PC-3 (cell line): ENCODE measurements at regions of chr1 and their contacts with region 1.

Region 1: DNA sequence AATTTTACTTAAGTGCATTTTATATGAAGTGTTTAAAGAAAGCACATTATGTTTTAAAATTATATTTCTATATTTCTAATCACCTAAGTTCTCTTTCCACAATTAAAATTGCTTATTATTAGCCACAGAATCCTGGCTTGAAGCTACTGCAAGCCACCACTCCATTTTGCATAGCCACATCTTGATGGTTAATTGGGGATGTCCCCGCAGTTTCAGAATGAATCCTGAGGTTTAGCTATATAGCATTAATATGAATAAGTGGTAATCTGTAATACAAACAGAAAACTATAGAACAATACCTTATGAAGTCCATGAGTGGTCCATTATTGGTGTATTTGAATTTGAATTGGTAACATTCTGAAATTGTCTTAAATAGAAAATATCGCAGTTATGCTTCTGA is 11.6 kb upstream of the GOLPH3L start:
- DNase-seq: no peak
- ATAC-seq: no peak
- H3K4me3 ChIP-seq: no peak overlapping the region
- H3K27ac ChIP-seq: no peak overlapping the region
- H3K4me1 ChIP-seq: no peaks in the 10 kb centered on the region
- H3K27me3 ChIP-seq: no peaks in the 10 kb centered on the region
- CTCF ChIP-seq: no peak

Region 2: GRCh38 chr1:150757156-150757555 is 48.6 kb after region 1 on chr1:
- CTCF ChIA-PET with region 1: no interaction called
- POLR2A ChIA-PET with region 1: no interaction called
- intact Hi-C with region 1: loop called (anchors 5 kb)
- DNase-seq: no peak
- ATAC-seq: no peak
- H3K4me3 ChIP-seq: no peak overlapping the region
- H3K27ac ChIP-seq: no peak overlapping the region
- H3K4me1 ChIP-seq: no peaks in the 10 kb centered on the region
- H3K27me3 ChIP-seq: no peaks in the 10 kb centered on the region
- CTCF ChIP-seq: no peak

Region 3: GRCh38 chr1:150820710-150821512 is 112.3 kb after region 1 on chr1:
- CTCF ChIA-PET with region 1: no interaction called
- POLR2A ChIA-PET with region 1: no interaction called
- intact Hi-C with region 1: no loop called
- DNase-seq: peak; percentile 74
- ATAC-seq: peak; percentile 100
- H3K4me3 ChIP-seq: no peak overlapping the region
- H3K27ac ChIP-seq: no peak overlapping the region
- H3K4me1 ChIP-seq: peaks cover 15% of the 10 kb centered on the region
- H3K27me3 ChIP-seq: no peaks in the 10 kb centered on the region
- CTCF ChIP-seq: no peak